ENCODE measurements at regions of chr12 and their contacts with region 1.

Region 1: DNA sequence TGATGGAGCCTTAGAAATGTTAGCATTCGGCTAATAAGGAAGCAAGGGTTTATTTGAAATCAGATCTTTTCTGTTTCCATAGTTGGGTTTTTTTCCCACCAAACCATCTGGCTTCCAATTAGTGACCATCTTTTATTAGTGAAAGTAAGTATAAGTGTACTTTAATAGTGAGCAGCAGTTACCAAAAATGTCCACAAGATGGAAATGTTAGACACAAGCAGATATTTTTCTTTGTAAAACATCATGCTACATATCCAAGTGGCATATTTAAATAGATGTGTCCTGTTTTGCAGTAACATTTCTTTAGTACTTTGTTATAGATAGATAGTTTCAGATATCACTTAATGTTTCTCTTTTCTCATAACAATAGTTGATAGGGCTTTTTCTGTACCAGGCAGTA is 28.8 kb downstream of the YEATS4 start:
- DNase-seq: no peak
- H3K4me3 Mint-ChIP-seq: no peak overlapping the region
- H3K27ac Mint-ChIP-seq: no peak overlapping the region
- H3K4me1 Mint-ChIP-seq: peaks cover 22% of the 10 kb centered on the region
- H3K27me3 Mint-ChIP-seq: no peaks in the 10 kb centered on the region

Region 2: DNA sequence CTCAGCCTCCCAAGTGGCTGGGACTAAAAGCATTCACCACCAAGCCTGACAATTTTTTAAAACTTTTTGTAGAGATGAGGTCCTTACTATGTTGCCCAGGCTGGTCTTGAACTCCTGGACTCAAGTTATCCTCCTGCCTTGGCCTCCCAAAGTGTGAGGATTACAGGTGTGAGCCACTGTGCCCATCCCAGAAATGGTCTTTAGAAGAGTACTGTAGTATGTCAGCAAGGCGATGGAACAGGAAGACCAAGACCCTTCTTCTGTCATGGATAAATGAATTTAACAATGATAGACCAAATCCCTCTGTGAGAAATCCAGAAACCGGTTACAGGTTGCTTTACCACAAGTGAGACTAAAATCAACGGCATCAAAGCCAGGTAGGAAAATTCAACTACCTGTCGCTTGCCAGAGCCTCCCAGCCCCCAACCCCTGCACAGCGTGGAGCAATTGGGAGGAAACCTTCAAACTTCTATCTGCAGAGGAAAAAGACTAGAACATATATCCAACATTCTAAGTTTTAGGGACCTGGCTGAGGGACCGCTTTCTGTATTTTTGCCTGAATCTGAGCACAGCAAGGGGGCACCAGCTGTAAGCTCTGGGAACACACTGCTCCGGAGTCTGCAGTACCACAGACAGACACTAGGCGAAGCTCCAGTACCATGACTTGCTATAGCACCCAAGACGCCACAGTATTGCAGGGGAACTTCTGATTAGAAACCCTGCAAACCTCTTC is 97.7 kb before region 1 on chr12:
- intact Hi-C with region 1: no loop called
- DNase-seq: peak; percentile 67
- H3K4me3 Mint-ChIP-seq: no peak overlapping the region
- H3K27ac Mint-ChIP-seq: no peak overlapping the region
- H3K4me1 Mint-ChIP-seq: peaks cover 8% of the 10 kb centered on the region
- H3K27me3 Mint-ChIP-seq: peaks cover 53% of the 10 kb centered on the region

Region 3: DNA sequence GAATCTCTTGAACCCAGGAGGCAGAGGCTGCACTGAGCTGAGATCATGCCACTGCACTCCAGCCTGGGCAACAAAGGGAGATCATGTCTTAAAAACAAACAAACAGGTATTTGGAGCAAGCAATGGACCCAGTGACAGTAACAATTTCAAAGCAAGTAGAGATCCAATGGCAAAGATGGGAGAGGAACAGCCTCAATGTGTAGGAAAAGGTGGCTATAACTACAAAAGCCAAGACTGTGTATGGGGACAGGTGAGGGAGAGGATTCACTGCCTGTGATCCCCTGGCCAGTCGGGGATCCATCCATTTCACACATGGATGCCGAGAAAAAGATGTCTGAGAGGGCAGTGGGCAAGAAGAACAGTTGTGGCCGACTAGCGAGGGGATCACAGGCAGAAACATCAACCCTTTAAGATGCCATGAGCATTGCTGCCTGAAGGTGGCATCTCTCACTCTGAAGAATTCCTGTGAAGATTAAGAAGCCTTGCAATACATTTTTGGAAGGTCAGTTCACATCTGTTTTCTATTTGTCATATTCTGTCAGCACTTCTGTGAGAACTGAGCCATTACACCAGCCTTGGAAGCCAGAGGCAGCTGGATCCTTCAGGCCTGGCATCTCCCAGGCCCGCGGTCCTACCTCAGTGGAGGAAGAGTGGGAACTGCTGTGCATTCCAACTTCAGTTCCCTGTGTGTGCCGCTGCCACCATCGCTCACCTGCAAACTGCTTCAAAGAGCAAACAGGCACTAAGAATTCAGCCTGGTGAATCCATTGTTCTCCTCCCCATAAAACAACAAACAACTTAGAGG is 27.3 kb after region 1 on chr12:
- intact Hi-C with region 1: no loop called
- DNase-seq: no peak
- H3K4me3 Mint-ChIP-seq: no peak overlapping the region
- H3K27ac Mint-ChIP-seq: no peak overlapping the region
- H3K4me1 Mint-ChIP-seq: no peaks in the 10 kb centered on the region
- H3K27me3 Mint-ChIP-seq: no peaks in the 10 kb centered on the region

Region 4: GRCh38 chr12:69534389-69534822 is 146.0 kb after region 1 on chr12:
- intact Hi-C with region 1: loop called (anchors 5 kb)
- DNase-seq: peak; percentile 24
- H3K4me3 Mint-ChIP-seq: no peak overlapping the region
- H3K27ac Mint-ChIP-seq: peak overlapping the region; percentile 73
- H3K4me1 Mint-ChIP-seq: peaks cover 22% of the 10 kb centered on the region
- H3K27me3 Mint-ChIP-seq: no peaks in the 10 kb centered on the region

Region 5: DNA sequence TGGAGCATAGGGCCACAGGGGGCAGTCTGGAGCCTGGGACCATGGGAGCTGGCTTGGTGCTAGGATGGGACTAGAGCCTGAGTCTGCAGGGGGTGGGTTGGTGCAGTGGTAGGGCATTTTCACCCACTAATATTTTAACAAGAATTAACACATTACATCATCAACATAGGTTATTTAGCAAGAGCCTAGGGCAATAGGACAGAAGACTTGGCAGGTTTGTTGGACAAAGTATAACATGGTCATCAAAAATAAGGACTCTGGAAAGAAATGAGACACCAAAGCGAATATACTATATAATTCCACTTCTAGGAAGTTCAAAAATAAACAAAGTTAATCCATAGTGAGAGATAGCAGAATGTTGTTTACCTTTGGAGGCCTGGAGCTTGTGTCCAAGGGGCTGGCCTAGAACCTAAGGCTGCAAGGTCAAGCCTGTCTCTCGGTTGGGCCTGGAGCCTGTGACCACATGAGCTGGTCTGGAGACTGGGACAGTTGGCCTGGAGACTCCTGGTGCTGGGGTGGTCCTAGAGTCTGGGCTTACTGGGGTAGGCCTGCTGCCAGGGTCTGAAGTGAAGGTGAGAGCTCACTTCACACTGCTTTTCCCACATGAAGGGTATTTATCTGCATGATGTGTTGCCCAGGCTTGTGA is 826.7 kb after region 1 on chr12:
- intact Hi-C with region 1: no loop called
- DNase-seq: no peak
- H3K4me3 Mint-ChIP-seq: no peak overlapping the region
- H3K27ac Mint-ChIP-seq: no peak overlapping the region
- H3K4me1 Mint-ChIP-seq: no peaks in the 10 kb centered on the region
- H3K27me3 Mint-ChIP-seq: no peaks in the 10 kb centered on the region

Measured in activated T-helper 2 cell treated with anti-CD3 and anti-CD28 coated beads, Interferon-gamma antibody, Interleukin-2, Interleukin-4, amounts not matched to agents 10 μg/mL and 5 μg/mL and 100 μg/mL, durations not matched to agents 14 hours and 24 hours and 36 hours (primary cell).